Head of caudate nucleus (tissue), 42 donors: ENCODE measurements at regions of chr1 and their contacts with region 1.

Region 1: DNA sequence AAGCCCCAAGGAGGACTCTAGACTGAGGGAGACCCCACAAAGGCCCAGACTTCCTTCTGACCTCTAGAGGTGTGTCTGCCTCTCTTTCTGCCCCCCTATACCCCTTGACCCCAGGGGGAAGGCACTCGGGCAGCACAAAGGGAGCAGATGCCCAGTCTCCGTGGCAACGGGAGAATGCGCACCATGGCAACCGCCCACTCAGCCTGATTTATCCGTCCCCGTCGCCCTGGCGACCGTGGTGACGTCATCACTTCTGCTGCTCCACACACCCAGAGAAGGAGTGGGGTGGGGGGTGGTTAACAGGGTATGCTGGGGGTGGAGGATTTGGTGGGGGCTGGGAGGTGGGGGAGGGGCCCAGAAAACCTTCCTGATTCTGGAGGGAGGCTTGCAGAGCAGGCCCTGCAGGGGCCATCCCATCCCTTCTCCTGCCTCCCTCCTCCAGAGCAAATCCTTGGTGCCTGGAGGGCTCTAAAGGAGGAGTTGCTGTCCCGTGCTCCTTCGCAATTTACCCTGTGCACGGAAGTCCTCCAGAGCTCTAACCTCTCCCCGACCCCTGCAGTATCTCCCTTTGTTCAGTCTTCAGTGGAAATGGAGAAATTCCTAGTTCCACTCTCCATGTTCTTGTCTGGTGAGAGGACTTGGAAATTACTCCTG is 6.3 kb downstream of the CELF3 start:
- DNase-seq: peak; percentile 80 to 99 (median 93)

Region 2: GRCh38 chr1:151611832-151612500 is 98.3 kb before region 1 on chr1 and contains the start of gene SNX27:
- intact Hi-C with region 1: loop called (anchors 10 kb)
- DNase-seq: peak; percentile 85 to 98 (median 94)

Region 3: GRCh38 chr1:151680812-151681211 is 29.5 kb before region 1 on chr1:
- intact Hi-C with region 1: no loop called
- DNase-seq: no peak

Region 4: GRCh38 chr1:151908228-151908691 is 197.9 kb after region 1 on chr1:
- intact Hi-C with region 1: no loop called
- DNase-seq: peak in 2 of 42 donors; percentile 18 to 41